ENCODE measurements at regions of chr6 and their contacts with region 1.

Region 1: DNA sequence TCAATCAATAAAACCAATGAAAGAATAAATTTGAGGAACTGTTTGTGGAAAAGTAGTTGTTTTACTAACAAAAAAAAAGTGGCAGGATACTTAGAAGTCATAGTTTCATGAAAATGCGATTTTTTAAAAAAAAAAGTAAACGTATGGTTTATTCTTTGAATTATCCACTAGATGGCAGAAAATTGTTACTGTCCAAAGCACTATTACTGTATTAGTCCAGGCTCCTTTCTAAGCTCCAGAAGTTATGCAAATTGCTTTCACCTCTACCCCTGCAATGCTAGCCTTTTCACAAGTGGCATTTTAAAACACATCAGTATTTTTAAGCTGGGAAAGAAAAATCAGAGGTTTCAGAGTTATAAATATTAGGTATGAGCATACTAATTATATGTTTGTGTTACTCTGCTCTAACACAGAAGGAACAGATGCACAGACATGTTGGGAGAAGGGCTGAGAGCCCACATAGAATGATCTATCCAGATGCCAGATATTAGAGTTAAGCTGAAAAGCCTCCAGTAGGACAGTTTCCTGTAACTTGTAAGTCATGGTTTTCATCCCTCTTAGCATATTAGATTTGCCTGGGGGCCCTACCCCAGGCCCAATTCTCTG is 63.9 kb downstream of the FHL5 start:
- DNase-seq: peak; percentile 45
- CTCF ChIP-seq: peak; percentile 35

Region 2: DNA sequence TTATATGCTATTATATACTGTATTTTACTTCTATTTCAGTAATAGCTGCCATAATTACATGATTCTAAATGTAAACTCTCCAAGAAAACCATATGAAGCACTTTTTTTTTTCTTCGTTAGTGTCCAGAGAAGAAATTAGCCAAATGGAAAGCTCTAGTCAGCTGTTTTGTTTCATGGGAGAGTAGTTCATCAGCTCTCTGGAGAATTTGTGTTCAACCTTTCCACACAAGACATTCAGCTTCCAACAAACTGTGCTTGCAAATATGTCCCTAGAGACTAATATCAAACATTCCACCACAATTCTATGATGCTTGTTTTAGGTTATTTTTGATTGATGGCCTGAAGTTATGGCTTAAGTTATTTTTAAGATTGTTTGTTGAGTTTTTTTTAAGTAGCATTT is 44.4 kb before region 1 on chr6:
- in situ Hi-C with region 1: no loop called
- DNase-seq: no peak
- CTCF ChIP-seq: no peak

Region 3: GRCh38 chr6:96897383-96898240 is 270.8 kb after region 1 on chr6 and contains the start of gene NDUFAF4:
- in situ Hi-C with region 1: loop called (anchors 25 kb)
- DNase-seq: peak; percentile 91
- CTCF ChIP-seq: peak; percentile 97

Region 4: DNA sequence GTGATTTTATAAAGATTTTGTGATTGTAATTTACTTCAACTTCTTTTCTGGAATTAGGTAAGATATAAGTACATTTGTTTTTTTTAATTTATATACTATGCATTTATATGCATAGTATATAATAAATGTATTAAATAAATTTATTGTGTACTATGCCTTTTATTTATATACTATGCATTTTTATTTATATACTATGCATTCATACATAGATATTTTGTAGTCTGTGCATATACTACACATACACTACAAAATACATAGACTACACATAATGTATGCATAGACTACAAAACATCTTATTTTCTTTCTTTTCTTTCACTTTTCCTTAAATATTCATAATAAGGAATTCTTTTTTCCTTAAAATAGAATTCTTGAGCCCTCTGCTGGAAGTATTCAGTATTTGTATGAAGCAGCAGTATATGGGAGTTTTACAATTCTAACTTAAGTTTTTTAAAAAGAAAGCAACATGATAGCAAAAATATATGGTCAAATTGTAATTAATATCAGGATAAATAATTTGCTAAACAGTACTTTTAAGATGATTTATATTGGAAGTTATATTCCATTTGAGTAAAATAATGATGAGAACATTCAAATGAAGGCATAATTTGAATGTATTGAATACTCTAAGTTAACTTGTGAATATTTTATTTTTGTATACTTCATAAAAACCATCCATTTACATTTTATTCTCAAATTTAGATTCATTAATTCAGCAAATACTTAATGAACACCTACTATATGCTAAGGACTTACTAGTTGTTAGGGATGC is 427.0 kb after region 1 on chr6:
- in situ Hi-C with region 1: loop called (anchors 5 kb)
- DNase-seq: no peak
- CTCF ChIP-seq: peak; percentile 33